Caco-2 (cell line): ENCODE measurements at regions of chr13 and their contacts with region 1.

Region 1: DNA sequence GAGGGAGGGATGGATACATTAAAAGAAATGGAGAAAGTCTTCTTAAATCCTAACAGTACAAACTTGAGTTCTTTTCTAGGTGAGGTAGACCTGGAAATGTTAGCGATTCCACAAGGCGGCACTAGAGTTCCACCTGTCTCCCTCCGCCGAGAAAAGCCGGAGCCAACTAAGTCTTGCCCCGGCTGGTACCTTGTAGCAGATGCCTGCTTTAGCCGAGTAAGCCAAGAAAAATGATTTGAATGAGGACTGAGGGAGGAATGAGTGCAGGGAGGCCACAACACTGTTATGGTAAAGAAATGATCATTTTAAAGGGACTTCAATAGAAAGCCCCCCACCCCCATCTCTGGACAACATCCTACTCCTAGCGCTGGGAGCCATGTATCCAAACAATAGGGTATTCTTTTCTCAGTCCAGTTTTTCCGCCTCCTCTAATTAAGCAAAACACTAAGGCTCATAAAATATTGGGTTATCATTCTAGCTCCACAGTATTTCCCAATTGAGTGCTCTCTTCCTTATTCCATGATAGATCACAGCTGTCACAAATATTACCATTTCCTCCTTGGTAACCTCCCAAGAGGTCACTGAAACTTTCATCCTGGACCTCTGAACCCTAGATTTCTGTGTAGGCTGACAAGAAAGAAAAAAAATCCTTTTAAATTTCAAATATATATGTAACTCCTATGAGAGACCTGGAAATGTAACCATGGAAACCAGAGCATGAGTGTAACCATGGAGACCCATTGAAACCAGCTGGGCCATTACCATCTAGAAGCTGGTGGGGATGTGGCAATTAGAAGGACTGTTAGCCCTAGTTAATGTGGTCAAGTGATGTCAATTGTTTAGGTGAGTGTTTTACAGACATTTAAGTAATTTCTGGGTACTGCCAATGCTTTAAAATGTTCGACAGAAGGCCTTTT is 58.3 kb downstream of the GPALPP1 start:
- DNase-seq: peak; percentile 76 to 83
- H3K4me3 ChIP-seq: peak overlapping the region; percentile 46
- H3K4me3 Mint-ChIP-seq: peak overlapping the region; percentile 70
- H3K27ac Mint-ChIP-seq: no peak overlapping the region
- H3K4me1 ChIP-seq: peaks cover 12% of the 10 kb centered on the region
- H3K4me1 Mint-ChIP-seq: peaks cover 4% of the 10 kb centered on the region
- H3K27me3 ChIP-seq: no peaks in the 10 kb centered on the region
- H3K27me3 Mint-ChIP-seq: no peaks in the 10 kb centered on the region
- CTCF ChIP-seq: peak; percentile 90 to 97

Region 2: GRCh38 chr13:45119991-45120864 is 72.6 kb after region 1 on chr13 and contains the start of gene GTF2F2:
- CTCF ChIA-PET with region 1: interaction called, 4 read pairs
- POLR2A ChIA-PET with region 1: no interaction called
- intact Hi-C with region 1: loop called (anchors 1 kb)
- DNase-seq: peak; percentile 92 to 94
- H3K4me3 ChIP-seq: peak within 1 kb of the TSS; percentile 64
- H3K4me3 Mint-ChIP-seq: no peak within 1 kb of the TSS
- H3K27ac Mint-ChIP-seq: no peak within 1 kb of the TSS
- H3K4me1 ChIP-seq: peaks cover 11% of the 10 kb centered on the region
- H3K4me1 Mint-ChIP-seq: no peaks in the 10 kb centered on the region
- H3K27me3 ChIP-seq: no peaks in the 10 kb centered on the region
- H3K27me3 Mint-ChIP-seq: no peaks in the 10 kb centered on the region
- CTCF ChIP-seq: no peak
- total RNA-seq, gene GTF2F2: 28.1 and 30.8 TPM in 2 replicates

Region 3: GRCh38 chr13:45194081-45194939 is 146.7 kb after region 1 on chr13:
- CTCF ChIA-PET with region 1: interaction called, 4 read pairs
- POLR2A ChIA-PET with region 1: no interaction called
- intact Hi-C with region 1: loop called (anchors 10 kb)
- DNase-seq: peak in 1 of 2 experiments; percentile 43
- H3K4me3 ChIP-seq: no peak overlapping the region
- H3K4me3 Mint-ChIP-seq: no peak overlapping the region
- H3K27ac Mint-ChIP-seq: no peak overlapping the region
- H3K4me1 ChIP-seq: peaks cover 16% of the 10 kb centered on the region
- H3K4me1 Mint-ChIP-seq: no peaks in the 10 kb centered on the region
- H3K27me3 ChIP-seq: no peaks in the 10 kb centered on the region
- H3K27me3 Mint-ChIP-seq: no peaks in the 10 kb centered on the region
- CTCF ChIP-seq: peak in 1 of 2 experiments; percentile 34

Region 4: GRCh38 chr13:45280751-45281634 is 233.3 kb after region 1 on chr13:
- CTCF ChIA-PET with region 1: interaction called, 21 read pairs
- POLR2A ChIA-PET with region 1: no interaction called
- intact Hi-C with region 1: loop called (anchors 1 kb)
- DNase-seq: peak; percentile 56 to 77
- H3K4me3 ChIP-seq: no peak overlapping the region
- H3K4me3 Mint-ChIP-seq: no peak overlapping the region
- H3K27ac Mint-ChIP-seq: no peak overlapping the region
- H3K4me1 ChIP-seq: no peaks in the 10 kb centered on the region
- H3K4me1 Mint-ChIP-seq: peaks cover 8% of the 10 kb centered on the region
- H3K27me3 ChIP-seq: no peaks in the 10 kb centered on the region
- H3K27me3 Mint-ChIP-seq: no peaks in the 10 kb centered on the region
- CTCF ChIP-seq: peak; percentile 57 to 87

Region 5: GRCh38 chr13:45310341-45311125 is 262.9 kb after region 1 on chr13:
- CTCF ChIA-PET with region 1: interaction called, 6 read pairs
- POLR2A ChIA-PET with region 1: interaction called, 6 read pairs
- intact Hi-C with region 1: loop called (anchors 1 kb)
- DNase-seq: no peak
- H3K4me3 ChIP-seq: peak overlapping the region; percentile 53
- H3K4me3 Mint-ChIP-seq: peak overlapping the region; percentile 65
- H3K27ac Mint-ChIP-seq: no peak overlapping the region
- H3K4me1 ChIP-seq: peaks cover 13% of the 10 kb centered on the region
- H3K4me1 Mint-ChIP-seq: peaks cover 10% of the 10 kb centered on the region
- H3K27me3 ChIP-seq: no peaks in the 10 kb centered on the region
- H3K27me3 Mint-ChIP-seq: no peaks in the 10 kb centered on the region
- CTCF ChIP-seq: no peak

Region 6: GRCh38 chr13:45393941-45394570 is 346.4 kb after region 1 on chr13:
- CTCF ChIA-PET with region 1: interaction called, 7 read pairs
- POLR2A ChIA-PET with region 1: no interaction called
- intact Hi-C with region 1: loop called (anchors 1 kb)
- DNase-seq: peak; percentile 70 to 71
- H3K4me3 ChIP-seq: no peak overlapping the region
- H3K4me3 Mint-ChIP-seq: no peak overlapping the region
- H3K27ac Mint-ChIP-seq: no peak overlapping the region
- H3K4me1 ChIP-seq: no peaks in the 10 kb centered on the region
- H3K4me1 Mint-ChIP-seq: peaks cover 4% of the 10 kb centered on the region
- H3K27me3 ChIP-seq: no peaks in the 10 kb centered on the region
- H3K27me3 Mint-ChIP-seq: no peaks in the 10 kb centered on the region
- CTCF ChIP-seq: peak; percentile 81 to 94